IMR-90 (cell line): ENCODE measurements at regions of chr17 and their contacts with region 1.

Region 1: GRCh38 chr17:31008374-31009041 is 37.7 kb downstream of the RNF135 start:
- DNase-seq: peak; percentile 45
- ATAC-seq: peak; percentile 75
- H3K4me3 ChIP-seq: peak overlapping the region; percentile 47
- H3K27ac ChIP-seq: 0 out of 2 replicates have a peak overlapping the region, but pooled peaks have one; percentile 0
- H3K4me1 ChIP-seq: no peaks in the 10 kb centered on the region; the same call in 1 of the 2 replicates
- H3K27me3 ChIP-seq: no peaks in the 10 kb centered on the region
- CTCF ChIP-seq: no peak
- POLR2A ChIP-seq: no peak
- RAD21 ChIP-seq: no peak

Region 2: DNA sequence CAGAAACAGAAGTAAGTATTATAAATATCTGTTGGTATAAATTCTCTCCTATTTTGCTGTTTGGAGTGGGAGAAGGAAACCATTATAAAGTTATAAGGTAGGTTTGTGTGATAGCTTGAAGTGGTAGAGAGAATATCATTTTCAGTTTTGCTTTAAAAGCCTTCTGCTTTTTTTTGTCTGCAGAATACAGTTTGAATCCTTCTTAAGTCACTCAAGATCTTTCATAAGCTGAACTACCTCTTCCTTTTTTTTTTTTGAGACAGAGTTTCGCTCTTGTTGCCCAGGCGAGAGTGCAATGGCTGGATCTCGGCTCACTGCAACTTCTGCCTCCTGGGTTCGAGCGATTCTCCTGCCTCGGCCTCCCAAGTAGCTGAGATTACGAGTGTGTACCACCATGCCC is 167.7 kb before region 1 on chr17:
- CTCF ChIA-PET with region 1: no interaction called
- POLR2A ChIA-PET with region 1: interaction called, 10 read pairs
- dilution Hi-C with region 1: no loop called
- in situ Hi-C with region 1: no loop called
- intact Hi-C with region 1: no loop called
- DNase-seq: no peak
- ATAC-seq: no peak
- H3K4me3 ChIP-seq: no peak overlapping the region
- H3K27ac ChIP-seq: no peak overlapping the region
- H3K4me1 ChIP-seq: no peaks in the 10 kb centered on the region
- H3K27me3 ChIP-seq: no peaks in the 10 kb centered on the region
- CTCF ChIP-seq: no peak
- POLR2A ChIP-seq: no peak
- RAD21 ChIP-seq: no peak

Region 3: DNA sequence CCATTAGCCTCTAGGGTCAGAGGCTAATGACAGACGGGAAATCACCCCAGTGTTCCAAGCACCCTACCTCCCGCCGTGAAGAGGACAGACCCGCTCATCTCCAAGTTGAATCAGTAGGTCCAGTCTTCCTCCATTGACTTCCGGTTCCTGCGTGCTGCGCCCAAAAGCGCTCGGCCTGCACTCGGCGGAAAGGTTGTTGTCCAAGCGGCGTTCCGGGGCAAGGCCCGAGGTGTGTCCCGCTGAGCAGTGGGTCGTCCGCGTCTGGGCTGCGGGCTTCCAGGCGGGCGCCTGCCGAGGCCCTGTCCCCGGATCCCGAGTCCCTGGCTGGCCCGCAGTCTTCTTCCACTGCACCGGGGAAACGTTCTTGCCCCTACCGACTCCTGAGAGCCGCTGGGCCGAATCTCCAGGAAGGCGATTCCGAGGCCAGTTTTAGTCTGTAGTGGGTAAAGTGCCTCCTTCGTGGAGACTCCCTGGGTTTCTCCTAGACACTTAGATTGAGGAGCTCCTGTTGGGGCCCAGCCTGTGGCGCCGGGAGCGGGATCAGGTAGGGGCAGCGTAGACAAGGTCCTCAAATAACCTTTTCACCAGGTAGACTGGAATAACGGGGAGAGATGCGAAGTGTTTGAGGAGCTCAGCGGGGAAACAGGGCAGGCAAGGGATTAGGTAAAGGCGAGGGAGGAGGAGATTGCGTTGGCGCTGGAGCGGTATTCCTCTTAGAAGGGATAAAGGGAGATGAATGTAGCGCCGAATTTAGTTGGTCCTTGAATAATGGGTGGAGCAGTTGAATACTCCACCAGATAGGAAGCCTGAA is 102.2 kb before region 1 on chr17 and contains the start of gene TEFM:
- CTCF ChIA-PET with region 1: no interaction called
- POLR2A ChIA-PET with region 1: no interaction called
- dilution Hi-C with region 1: no loop called
- in situ Hi-C with region 1: no loop called
- intact Hi-C with region 1: loop called (anchors 2 kb)
- DNase-seq: peak; percentile 92
- ATAC-seq: peak; percentile 99
- H3K4me3 ChIP-seq: peak within 1 kb of the TSS; percentile 71
- H3K27ac ChIP-seq: peak within 1 kb of the TSS; percentile 79
- H3K4me1 ChIP-seq: peaks cover 4% of the 10 kb centered on the region; the same call in 1 of the 2 replicates
- H3K27me3 ChIP-seq: no peaks in the 10 kb centered on the region
- CTCF ChIP-seq: no peak
- POLR2A ChIP-seq: peak; percentile 81
- RAD21 ChIP-seq: peak; percentile 40
- total RNA-seq, gene TEFM: 13.8 and 17.8 TPM in 2 replicates

Region 4: GRCh38 chr17:30921544-30922196 is 86.8 kb before region 1 on chr17 and contains the start of gene ADAP2:
- CTCF ChIA-PET with region 1: no interaction called
- POLR2A ChIA-PET with region 1: interaction called, 11 read pairs
- dilution Hi-C with region 1: no loop called
- in situ Hi-C with region 1: no loop called
- intact Hi-C with region 1: no loop called
- DNase-seq: no peak
- ATAC-seq: peak; percentile 58
- H3K4me3 ChIP-seq: peak within 1 kb of the TSS; percentile 1; the same call in 1 of the 2 replicates
- H3K27ac ChIP-seq: no peak within 1 kb of the TSS
- H3K4me1 ChIP-seq: peaks cover 5% of the 10 kb centered on the region
- H3K27me3 ChIP-seq: peaks cover 13% of the 10 kb centered on the region
- CTCF ChIP-seq: no peak
- POLR2A ChIP-seq: no peak
- RAD21 ChIP-seq: no peak
- total RNA-seq, gene ADAP2: 0.90 and 1.1 TPM in 2 replicates